ENCODE measurements at regions of chr9 and their contacts with region 1.

Region 1: GRCh38 chr9:128846680-128847030 is 17.1 kb upstream of the SPOUT1 start:
- DNase-seq: no peak
- H3K4me3 ChIP-seq: no peak overlapping the region
- H3K27ac ChIP-seq: no peak overlapping the region
- H3K4me1 ChIP-seq: no peaks in the 10 kb centered on the region
- H3K27me3 ChIP-seq: no peaks in the 10 kb centered on the region
- CTCF ChIP-seq: no peak
- POLR2A ChIP-seq: no peak

Region 2: GRCh38 chr9:128625391-128626145 is 221.1 kb before region 1 on chr9:
- CTCF ChIA-PET with region 1: no interaction called
- POLR2A ChIA-PET with region 1: no interaction called
- dilution Hi-C with region 1: no loop called
- intact Hi-C with region 1: no loop called
- DNase-seq: no peak
- H3K4me3 ChIP-seq: no peak overlapping the region
- H3K27ac ChIP-seq: no peak overlapping the region
- H3K4me1 ChIP-seq: no peaks in the 10 kb centered on the region
- H3K27me3 ChIP-seq: no peaks in the 10 kb centered on the region
- CTCF ChIP-seq: no peak
- POLR2A ChIP-seq: no peak

Region 3: GRCh38 chr9:128825923-128826702 is 20.5 kb before region 1 on chr9:
- CTCF ChIA-PET with region 1: no interaction called
- POLR2A ChIA-PET with region 1: no interaction called
- dilution Hi-C with region 1: no loop called
- intact Hi-C with region 1: no loop called
- DNase-seq: no peak
- H3K4me3 ChIP-seq: no peak overlapping the region
- H3K27ac ChIP-seq: no peak overlapping the region
- H3K4me1 ChIP-seq: peaks cover 5% of the 10 kb centered on the region
- H3K27me3 ChIP-seq: no peaks in the 10 kb centered on the region
- CTCF ChIP-seq: no peak
- POLR2A ChIP-seq: no peak

Region 4: DNA sequence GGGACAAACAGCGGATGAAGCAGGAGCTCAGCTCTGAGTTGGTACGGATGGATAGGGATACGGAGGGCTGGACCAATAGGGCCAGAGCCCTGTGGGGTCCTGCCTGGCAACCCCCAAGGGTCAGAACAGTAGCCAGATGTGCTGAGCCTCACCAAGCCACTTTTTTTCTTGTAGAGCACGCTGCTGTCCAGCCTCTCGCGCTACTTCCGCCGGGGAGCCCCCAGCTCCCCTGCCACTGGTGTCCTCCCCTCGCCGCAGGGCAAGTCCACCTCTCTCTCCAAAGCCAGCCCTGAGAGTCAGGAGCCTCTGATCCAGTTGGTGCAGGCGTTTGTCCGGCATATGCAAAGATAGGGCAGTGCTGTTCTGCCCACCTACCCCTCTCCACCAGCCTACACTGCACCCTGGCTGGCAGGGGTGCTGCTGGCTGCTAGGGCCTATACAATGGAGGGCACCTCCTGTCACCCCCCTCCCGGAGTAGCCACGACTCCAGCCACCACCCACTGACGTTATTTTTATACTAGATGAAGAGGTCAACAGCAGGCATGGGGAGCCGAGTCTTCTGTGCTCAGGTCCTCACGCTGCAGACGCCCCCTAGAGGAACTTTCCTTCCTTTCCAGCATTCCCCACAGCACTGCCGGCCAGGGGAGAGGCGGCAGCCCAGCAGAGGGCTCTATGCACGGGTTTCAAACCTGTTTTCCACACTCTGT is 159.8 kb after region 1 on chr9:
- CTCF ChIA-PET with region 1: interaction called, 12 read pairs
- POLR2A ChIA-PET with region 1: no interaction called
- dilution Hi-C with region 1: no loop called
- intact Hi-C with region 1: no loop called
- DNase-seq: peak; percentile 70
- H3K4me3 ChIP-seq: no peak overlapping the region
- H3K27ac ChIP-seq: no peak overlapping the region
- H3K4me1 ChIP-seq: no peaks in the 10 kb centered on the region
- H3K27me3 ChIP-seq: no peaks in the 10 kb centered on the region
- CTCF ChIP-seq: peak; percentile 91 to 93
- POLR2A ChIP-seq: no peak